Activated naive CD8-positive, alpha-beta T cell treated with anti-CD3 and anti-CD28 coated beads, Interleukin-2, amount 10 ng/mL, durations not matched to agents 7 days and 5 days (primary cell): ENCODE measurements at regions of chr9 and their contacts with region 1.

Region 1: GRCh38 chr9:129460323-129461261 is 160.3 kb downstream of the C9orf50 start:
- DNase-seq: peak; percentile 86
- ATAC-seq: peak; percentile 89
- H3K4me3 Mint-ChIP-seq: peak overlapping the region; percentile 83
- H3K27ac Mint-ChIP-seq: peak overlapping the region; percentile 94
- H3K4me1 Mint-ChIP-seq: peaks cover 19% of the 10 kb centered on the region
- H3K27me3 Mint-ChIP-seq: peaks cover 10% of the 10 kb centered on the region

Region 2: GRCh38 chr9:129413537-129414376 is 46.8 kb before region 1 on chr9:
- POLR2A ChIA-PET with region 1: interaction called, 28 read pairs
- DNase-seq: peak; percentile 100
- ATAC-seq: peak; percentile 74
- H3K4me3 Mint-ChIP-seq: peak overlapping the region; percentile 83
- H3K27ac Mint-ChIP-seq: peak overlapping the region; percentile 95
- H3K4me1 Mint-ChIP-seq: peaks cover 21% of the 10 kb centered on the region
- H3K27me3 Mint-ChIP-seq: no peaks in the 10 kb centered on the region

Region 3: GRCh38 chr9:129422843-129423192 is 37.8 kb before region 1 on chr9:
- POLR2A ChIA-PET with region 1: interaction called, 11 read pairs
- DNase-seq: no peak
- ATAC-seq: peak; percentile 59
- H3K4me3 Mint-ChIP-seq: peak overlapping the region; percentile 55
- H3K27ac Mint-ChIP-seq: peak overlapping the region; percentile 79
- H3K4me1 Mint-ChIP-seq: peaks cover 14% of the 10 kb centered on the region
- H3K27me3 Mint-ChIP-seq: peaks cover 7% of the 10 kb centered on the region

Region 4: DNA sequence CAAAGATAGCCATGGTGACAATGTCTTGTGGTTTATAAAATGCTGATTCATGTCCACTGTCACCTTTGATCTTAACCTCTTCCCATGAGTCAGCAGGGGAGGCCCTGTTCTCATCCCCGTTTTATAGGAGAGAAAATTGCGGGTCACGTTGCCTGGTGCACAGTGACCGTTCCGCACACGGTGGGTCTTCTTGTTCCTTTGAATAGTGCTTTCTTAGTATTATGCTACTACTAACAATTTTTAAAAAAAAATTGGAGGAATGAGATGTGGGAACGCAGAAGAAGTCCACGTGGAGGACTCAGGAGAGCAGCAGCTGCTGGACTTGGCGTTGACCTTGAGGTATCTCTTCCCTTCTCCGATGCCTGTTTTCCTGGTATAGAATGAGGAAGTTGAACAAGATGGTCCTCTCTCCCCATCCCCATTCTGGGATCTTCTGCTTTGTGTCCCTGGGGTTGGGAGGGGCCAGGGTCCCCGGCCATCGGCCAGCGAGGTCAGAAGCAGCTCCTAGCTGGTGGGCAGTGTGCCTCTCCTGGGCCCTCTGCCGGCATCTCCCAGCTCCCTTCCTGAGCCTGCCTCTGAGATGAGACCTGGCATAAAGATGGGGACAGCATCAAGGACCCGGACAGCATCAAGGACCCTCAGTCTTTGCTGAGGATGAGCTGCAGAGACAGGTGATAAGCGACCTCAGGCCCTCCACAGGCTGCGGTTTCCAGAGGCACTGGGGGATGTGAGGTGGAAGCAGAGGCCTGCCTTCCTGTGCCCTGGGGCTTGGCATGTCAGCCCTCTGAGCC is 16.4 kb after region 1 on chr9:
- POLR2A ChIA-PET with region 1: interaction called, 12 read pairs
- DNase-seq: no peak
- ATAC-seq: no peak
- H3K4me3 Mint-ChIP-seq: no peak overlapping the region
- H3K27ac Mint-ChIP-seq: no peak overlapping the region
- H3K4me1 Mint-ChIP-seq: peaks cover 6% of the 10 kb centered on the region
- H3K27me3 Mint-ChIP-seq: peaks cover 12% of the 10 kb centered on the region

Region 5: DNA sequence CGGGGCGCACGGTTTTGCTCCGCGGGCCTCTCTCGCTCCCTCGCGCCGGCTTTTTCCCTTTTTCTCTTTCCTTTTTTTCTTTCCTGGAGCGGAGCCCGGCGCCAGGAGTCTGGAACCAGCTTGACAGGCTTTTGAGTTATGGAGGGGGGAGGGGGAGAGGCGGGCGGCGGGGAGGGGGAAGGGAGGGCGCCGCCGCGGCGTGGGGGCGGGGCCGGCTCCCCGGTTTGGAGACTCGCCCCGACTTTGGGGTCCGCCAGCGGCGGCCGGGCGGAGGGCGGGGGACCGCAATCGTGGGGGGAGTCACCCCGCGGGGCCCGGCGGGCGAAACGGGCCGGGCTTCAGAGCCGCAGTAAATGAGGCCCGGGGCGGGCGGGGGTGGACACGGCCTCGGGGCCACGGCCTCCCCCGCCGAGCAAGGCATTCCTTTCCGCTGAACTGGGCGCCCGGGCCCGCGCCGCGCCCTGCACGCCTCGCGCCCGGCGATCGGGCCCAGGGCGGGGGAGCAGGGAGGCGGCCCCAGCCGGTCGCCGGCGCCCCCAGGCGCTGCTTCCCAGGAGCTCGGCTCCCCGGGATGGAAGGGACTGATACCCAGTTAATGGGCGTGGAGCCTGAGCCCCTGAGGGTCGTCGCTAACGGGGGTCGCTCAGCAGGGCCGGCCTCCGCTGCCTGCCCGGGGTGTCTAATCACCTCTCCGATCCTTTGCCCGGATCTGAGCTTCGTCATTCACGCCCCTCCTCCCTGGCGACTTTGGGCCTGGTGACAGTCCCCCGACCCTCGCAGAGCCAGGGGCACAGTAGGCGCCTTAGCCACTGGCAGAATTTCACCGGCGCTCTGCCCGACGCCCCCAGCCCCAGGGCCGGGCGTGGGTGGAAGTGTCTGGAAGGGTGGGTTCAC is 22.2 kb after region 1 on chr9:
- POLR2A ChIA-PET with region 1: interaction called, 14 read pairs
- DNase-seq: peak; percentile 69
- ATAC-seq: peak; percentile 33
- H3K4me3 Mint-ChIP-seq: peak overlapping the region; percentile 68
- H3K27ac Mint-ChIP-seq: peak overlapping the region; percentile 73
- H3K4me1 Mint-ChIP-seq: peaks cover 17% of the 10 kb centered on the region
- H3K27me3 Mint-ChIP-seq: peaks cover 12% of the 10 kb centered on the region

Region 6: GRCh38 chr9:129489838-129490582 is 29.4 kb after region 1 on chr9:
- POLR2A ChIA-PET with region 1: interaction called, 14 read pairs
- DNase-seq: peak; percentile 66
- ATAC-seq: peak; percentile 38
- H3K4me3 Mint-ChIP-seq: peak overlapping the region; percentile 86
- H3K27ac Mint-ChIP-seq: peak overlapping the region; percentile 91
- H3K4me1 Mint-ChIP-seq: peaks cover 40% of the 10 kb centered on the region
- H3K27me3 Mint-ChIP-seq: no peaks in the 10 kb centered on the region

Region 7: DNA sequence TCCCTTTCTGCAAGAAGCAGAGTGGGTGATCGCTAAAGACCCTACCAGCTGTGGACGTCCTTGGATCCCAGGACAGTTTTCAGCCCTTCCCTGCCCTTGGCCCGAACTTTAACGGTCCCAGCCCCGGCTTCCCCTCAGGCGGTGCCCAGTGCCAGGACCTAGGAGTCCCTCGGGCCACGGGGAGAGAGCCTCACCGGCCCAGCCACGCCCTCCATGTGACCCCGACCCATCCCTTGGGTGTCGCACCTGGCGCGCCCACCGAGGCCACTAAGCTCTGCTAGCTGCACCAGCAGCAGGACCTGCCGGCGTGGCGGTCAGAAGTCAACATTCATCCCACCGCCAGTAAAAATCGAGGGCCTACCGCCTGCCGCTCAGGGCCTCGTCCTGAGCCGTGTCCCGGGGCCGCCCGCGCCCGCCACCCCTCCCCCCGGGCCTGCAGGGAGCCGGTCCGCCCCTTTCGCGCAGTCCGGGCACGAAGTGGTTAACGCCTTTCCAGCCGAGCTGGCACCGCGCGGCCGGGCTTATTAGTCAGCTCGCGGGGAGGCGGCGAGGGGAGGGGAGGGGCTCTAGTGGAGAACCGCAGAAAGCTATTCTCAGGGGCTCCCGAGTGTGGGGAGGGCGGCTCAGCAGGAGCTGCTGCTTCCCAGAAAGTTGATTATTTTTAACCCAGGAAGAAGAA is 35.9 kb after region 1 on chr9:
- POLR2A ChIA-PET with region 1: interaction called, 11 read pairs
- DNase-seq: peak; percentile 73
- ATAC-seq: peak; percentile 65
- H3K4me3 Mint-ChIP-seq: peak overlapping the region; percentile 81
- H3K27ac Mint-ChIP-seq: peak overlapping the region; percentile 76
- H3K4me1 Mint-ChIP-seq: peaks cover 18% of the 10 kb centered on the region
- H3K27me3 Mint-ChIP-seq: no peaks in the 10 kb centered on the region

Region 8: DNA sequence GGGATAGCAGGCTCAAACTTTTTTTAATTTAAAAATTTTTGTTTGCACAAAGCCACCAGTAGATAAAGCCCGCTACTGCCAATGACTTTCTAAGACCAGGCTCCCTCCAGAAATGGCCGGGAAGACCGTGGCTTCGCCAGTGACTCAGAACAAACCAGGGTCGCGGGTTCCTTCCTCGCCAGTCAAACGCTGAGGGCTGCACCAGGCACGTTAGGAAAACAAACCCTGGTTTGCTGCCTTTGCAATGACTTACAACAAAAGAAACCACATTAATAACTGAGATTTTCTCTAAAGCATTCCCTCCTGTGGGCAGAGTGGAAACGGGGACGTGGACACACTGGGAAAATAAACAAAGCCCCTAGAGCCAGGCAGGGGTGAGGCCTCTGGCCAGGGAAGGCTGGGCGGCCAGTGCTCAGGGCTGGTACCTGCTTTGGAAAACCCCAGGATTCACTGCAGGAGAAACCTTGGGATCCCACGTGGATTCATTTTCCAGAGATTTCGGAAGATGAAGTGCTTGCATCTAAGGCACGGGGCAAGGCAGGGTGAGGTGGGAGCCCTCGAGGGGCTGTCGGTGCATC is 208.6 kb after region 1 on chr9:
- POLR2A ChIA-PET with region 1: no interaction called
- DNase-seq: no peak
- ATAC-seq: no peak
- H3K4me3 Mint-ChIP-seq: no peak overlapping the region
- H3K27ac Mint-ChIP-seq: no peak overlapping the region
- H3K4me1 Mint-ChIP-seq: peaks cover 6% of the 10 kb centered on the region
- H3K27me3 Mint-ChIP-seq: peaks cover 21% of the 10 kb centered on the region

Region 9: DNA sequence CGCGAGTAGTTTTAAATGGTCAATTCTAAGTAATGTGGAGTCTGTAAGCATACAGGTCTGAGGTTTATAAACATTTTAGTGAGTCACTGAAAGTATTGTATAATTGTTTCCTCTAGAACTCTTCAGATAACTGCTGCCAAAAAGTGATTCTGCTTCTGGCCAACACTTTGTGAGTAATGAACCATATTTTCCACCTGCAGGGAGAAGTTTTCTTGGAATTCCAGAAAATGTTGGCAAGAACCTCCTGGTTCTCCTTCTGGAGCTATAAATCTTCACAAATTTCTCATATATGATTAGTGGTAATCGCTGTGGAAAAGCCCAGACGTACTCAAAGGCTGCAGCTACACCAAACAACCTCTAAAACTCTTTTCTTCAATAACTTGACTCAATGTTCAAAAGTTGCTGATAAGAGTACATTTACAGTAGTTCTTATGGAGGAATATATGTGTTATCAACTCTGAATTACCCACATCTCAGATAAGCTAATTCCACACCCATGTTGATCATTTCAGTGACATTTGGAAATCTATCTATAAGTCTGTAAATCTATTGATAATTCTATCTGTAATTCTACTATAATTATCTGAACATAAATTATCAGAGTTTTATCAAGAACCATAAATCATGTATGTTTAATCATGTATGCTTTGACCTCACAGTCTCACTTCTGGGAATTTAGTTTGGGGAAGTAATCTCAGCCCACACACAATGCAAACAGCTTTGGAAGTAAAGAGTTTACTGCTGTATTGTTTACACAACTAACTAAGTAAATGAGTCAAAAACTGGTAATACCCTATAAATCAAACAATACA is 508.3 kb after region 1 on chr9:
- POLR2A ChIA-PET with region 1: no interaction called
- DNase-seq: no peak
- ATAC-seq: no peak
- H3K4me3 Mint-ChIP-seq: no peak overlapping the region
- H3K27ac Mint-ChIP-seq: no peak overlapping the region
- H3K4me1 Mint-ChIP-seq: peaks cover 38% of the 10 kb centered on the region
- H3K27me3 Mint-ChIP-seq: no peaks in the 10 kb centered on the region